Activated CD4-positive, alpha-beta T cell treated with anti-CD3 and anti-CD28 coated beads, Interleukin-2, amount 10 ng/mL, durations not matched to agents 7 days and 5 days (primary cell): ENCODE measurements at regions of chr7 and their contacts with region 1.

Region 1: DNA sequence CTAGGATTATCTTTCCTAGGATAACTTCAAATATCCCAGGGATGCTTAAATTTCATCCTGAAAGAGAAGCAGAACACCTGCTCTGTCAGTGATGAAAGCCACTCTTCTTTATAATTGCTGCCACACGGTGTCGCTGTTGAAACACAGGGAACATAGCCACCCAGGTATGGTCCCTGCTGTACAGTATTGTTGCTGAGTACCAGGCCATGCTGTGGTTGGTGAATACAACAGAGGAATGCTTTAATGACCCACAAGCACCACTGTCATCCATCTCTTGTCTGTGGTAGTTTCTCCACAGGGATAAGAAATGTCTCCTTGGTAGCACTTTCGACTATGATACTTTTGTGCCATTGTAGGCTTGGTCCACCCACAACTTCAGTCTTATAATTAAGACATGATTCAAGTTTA is 70.6 kb upstream of the STARD3NL start:
- DNase-seq: peak; percentile 75
- H3K4me3 Mint-ChIP-seq: no peak overlapping the region
- H3K27ac Mint-ChIP-seq: no peak overlapping the region
- H3K4me1 Mint-ChIP-seq: no peaks in the 10 kb centered on the region
- H3K27me3 Mint-ChIP-seq: peaks cover 35% of the 10 kb centered on the region

Region 2: DNA sequence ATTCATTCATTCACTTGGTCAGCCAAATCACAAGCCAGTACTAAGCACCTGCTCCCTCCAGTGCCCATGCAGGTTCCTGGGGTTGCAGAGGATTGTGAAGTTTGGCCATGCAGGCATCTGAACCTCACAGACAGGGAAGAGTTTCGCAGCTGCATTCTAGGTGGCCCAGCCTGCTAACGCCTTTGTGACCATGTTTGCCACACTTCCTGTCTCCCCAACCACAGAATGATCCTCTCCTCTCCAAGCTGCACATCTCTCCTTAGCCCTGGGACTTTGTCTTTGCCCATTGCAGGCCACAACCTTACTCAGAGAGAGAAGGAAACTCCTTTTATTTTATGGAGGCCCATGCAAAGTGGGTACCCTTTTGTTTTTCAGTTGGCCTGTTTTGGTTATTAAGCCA is 155.2 kb before region 1 on chr7:
- CTCF ChIA-PET with region 1: no interaction called
- POLR2A ChIA-PET with region 1: no interaction called
- DNase-seq: no peak
- H3K4me3 Mint-ChIP-seq: no peak overlapping the region
- H3K27ac Mint-ChIP-seq: no peak overlapping the region
- H3K4me1 Mint-ChIP-seq: no peaks in the 10 kb centered on the region
- H3K27me3 Mint-ChIP-seq: no peaks in the 10 kb centered on the region

Region 3: DNA sequence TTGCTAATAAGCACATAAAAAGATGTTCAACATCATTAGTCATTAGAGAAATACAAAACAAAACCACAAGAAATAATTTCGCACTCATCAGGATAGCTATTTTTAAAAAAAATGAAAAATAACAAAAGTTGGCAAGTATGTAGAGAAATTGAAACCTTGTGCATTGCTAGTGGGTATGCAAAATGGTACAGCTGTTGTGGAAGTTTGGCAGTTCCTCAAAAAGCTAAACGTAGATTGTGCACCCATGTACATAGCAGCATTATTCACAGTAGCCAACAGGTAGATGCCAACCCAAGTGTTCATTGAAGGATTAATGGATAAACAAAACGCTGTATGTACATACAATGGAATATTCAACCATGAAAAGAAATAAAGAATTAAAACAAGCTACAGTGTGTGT is 35.2 kb after region 1 on chr7:
- CTCF ChIA-PET with region 1: no interaction called
- POLR2A ChIA-PET with region 1: interaction called, 16 read pairs
- DNase-seq: no peak
- H3K4me3 Mint-ChIP-seq: no peak overlapping the region
- H3K27ac Mint-ChIP-seq: no peak overlapping the region
- H3K4me1 Mint-ChIP-seq: no peaks in the 10 kb centered on the region
- H3K27me3 Mint-ChIP-seq: peaks cover 2% of the 10 kb centered on the region

Region 4: GRCh38 chr7:38369816-38370493 is 262.5 kb after region 1 on chr7:
- CTCF ChIA-PET with region 1: interaction called, 11 read pairs
- POLR2A ChIA-PET with region 1: no interaction called
- DNase-seq: peak; percentile 83
- H3K4me3 Mint-ChIP-seq: no peak overlapping the region
- H3K27ac Mint-ChIP-seq: peak overlapping the region; percentile 9
- H3K4me1 Mint-ChIP-seq: peaks cover 56% of the 10 kb centered on the region
- H3K27me3 Mint-ChIP-seq: no peaks in the 10 kb centered on the region